CD8-positive, alpha-beta T cell (primary cell): ENCODE measurements at regions of chr3 and their contacts with region 1.

Region 1: DNA sequence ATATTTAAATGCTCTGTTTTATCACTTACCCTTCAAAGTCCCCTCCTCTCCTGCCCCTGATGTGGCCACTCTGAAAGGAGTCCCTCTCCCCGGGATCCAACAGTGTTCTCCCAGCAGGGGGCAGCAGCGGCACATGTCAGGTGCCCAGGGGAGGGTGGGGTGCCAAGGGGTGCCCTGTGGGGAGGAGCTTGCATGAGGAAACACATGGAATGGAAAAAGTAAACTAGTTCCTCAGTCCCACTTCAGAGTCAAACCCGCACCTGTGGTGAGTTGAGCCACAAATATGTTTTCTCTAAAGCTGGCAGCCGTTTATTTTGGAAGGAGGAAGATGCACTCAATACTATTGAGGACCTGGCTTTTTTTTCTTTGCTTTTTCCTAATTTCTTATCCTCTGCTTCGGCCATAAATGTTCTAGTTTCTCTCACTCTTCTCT is 30.1 kb upstream of the NRROS start:
- DNase-seq: peak; percentile 85 to 99 (median 93)
- ATAC-seq: peak; percentile 81
- H3K4me3 ChIP-seq: no peak overlapping the region
- H3K4me3 Mint-ChIP-seq: peak overlapping the region; percentile 62
- H3K27ac ChIP-seq: peak overlapping the region in 1 of 2 experiments; percentile 14
- H3K27ac Mint-ChIP-seq: peak overlapping the region; percentile 81
- H3K4me1 ChIP-seq: peaks cover 27% of the 10 kb centered on the region
- H3K4me1 Mint-ChIP-seq: peaks cover 40% of the 10 kb centered on the region
- H3K27me3 ChIP-seq: no peaks in the 10 kb centered on the region
- H3K27me3 Mint-ChIP-seq: no peaks in the 10 kb centered on the region
- CTCF ChIP-seq: peak; percentile 93

Region 2: GRCh38 chr3:196596355-196596754 is 13.0 kb before region 1 on chr3:
- CTCF ChIA-PET with region 1: interaction called, 17 read pairs
- POLR2A ChIA-PET with region 1: interaction called, 4 read pairs
- intact Hi-C with region 1: no loop called
- DNase-seq: no peak
- ATAC-seq: no peak
- H3K4me3 ChIP-seq: no peak overlapping the region
- H3K4me3 Mint-ChIP-seq: no peak overlapping the region
- H3K27ac ChIP-seq: no peak overlapping the region
- H3K27ac Mint-ChIP-seq: no peak overlapping the region
- H3K4me1 ChIP-seq: peaks cover 4% of the 10 kb centered on the region
- H3K4me1 Mint-ChIP-seq: peaks cover 21% of the 10 kb centered on the region
- H3K27me3 ChIP-seq: no peaks in the 10 kb centered on the region
- H3K27me3 Mint-ChIP-seq: no peaks in the 10 kb centered on the region
- CTCF ChIP-seq: no peak

Region 3: DNA sequence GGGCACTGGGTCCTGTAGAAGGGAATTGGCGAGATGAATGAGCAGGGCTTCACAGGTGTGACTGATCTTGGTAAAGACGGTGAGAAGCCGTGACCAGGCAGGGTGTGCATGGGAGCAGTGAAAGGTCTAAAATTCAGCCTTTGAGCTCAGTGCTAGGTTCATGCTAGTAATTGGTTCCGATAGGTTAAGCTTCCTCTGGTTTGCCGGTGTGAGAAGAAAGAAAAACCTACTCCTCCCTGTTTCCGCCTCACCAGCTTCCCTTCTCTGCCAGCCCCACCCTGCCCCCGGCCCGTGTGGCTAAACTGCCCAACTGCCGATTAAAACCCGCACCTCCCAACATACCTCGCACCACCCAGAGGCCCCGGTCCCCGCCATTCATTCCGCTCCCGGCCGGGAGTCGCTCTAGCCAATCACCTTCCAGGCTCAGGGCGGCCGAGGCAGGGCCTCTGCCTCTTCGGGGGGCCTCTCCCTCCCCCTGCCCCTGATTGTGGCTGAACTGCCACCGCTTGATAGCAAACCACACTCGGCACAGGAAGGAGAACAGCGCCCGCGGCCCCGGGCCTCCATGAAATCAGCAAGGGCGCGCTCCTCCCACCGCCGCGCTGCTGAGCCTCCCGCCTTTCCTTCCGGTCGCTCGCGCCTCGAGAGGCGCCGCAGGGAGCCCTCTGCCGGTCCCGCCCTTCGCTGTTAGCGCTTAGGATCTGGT is 22.8 kb after region 1 on chr3:
- CTCF ChIA-PET with region 1: interaction called, 91 read pairs
- POLR2A ChIA-PET with region 1: interaction called, 11 read pairs
- intact Hi-C with region 1: loop called (anchors 1 kb)
- DNase-seq: peak; percentile 70 to 96 (median 89)
- ATAC-seq: peak; percentile 79
- H3K4me3 ChIP-seq: peak overlapping the region; percentile 46 to 50
- H3K4me3 Mint-ChIP-seq: peak overlapping the region; percentile 80
- H3K27ac ChIP-seq: peak overlapping the region; percentile 56 to 80
- H3K27ac Mint-ChIP-seq: peak overlapping the region; percentile 93
- H3K4me1 ChIP-seq: peaks cover 36% of the 10 kb centered on the region
- H3K4me1 Mint-ChIP-seq: peaks cover 51% of the 10 kb centered on the region
- H3K27me3 ChIP-seq: no peaks in the 10 kb centered on the region
- H3K27me3 Mint-ChIP-seq: no peaks in the 10 kb centered on the region
- CTCF ChIP-seq: no peak

Region 4: DNA sequence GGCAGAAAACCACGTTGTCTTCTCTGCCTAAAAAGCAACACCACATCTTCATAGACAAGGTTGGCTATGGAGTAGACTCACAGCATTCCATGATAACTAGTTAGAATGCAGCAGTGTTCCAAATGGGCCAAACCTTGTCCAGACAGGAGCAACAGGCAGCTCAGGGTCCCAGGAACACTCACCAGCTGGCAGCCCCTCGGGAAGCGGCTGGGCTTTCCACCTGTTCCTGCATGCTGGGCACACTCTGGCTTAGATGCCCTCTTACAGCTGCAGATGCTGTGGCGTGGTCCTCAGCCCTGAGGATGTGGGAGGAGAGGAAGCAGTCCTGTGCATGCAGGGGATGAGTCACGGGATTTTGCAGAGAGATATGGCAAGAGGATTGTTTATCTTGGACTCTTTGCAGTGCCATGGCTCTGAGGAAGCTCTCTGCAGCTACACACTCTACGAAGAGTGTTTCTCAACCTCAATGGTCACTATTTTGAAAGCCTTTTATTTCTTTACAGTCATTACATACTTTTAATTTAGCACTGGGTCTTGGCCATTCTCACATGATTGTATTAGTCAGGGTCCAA is 41.5 kb after region 1 on chr3:
- CTCF ChIA-PET with region 1: interaction called, 15 read pairs
- POLR2A ChIA-PET with region 1: no interaction called
- intact Hi-C with region 1: no loop called
- DNase-seq: no peak
- ATAC-seq: no peak
- H3K4me3 ChIP-seq: no peak overlapping the region
- H3K4me3 Mint-ChIP-seq: no peak overlapping the region
- H3K27ac ChIP-seq: no peak overlapping the region
- H3K27ac Mint-ChIP-seq: no peak overlapping the region
- H3K4me1 ChIP-seq: peaks cover 4% of the 10 kb centered on the region
- H3K4me1 Mint-ChIP-seq: peaks cover 26% of the 10 kb centered on the region
- H3K27me3 ChIP-seq: no peaks in the 10 kb centered on the region
- H3K27me3 Mint-ChIP-seq: no peaks in the 10 kb centered on the region
- CTCF ChIP-seq: no peak

Region 5: DNA sequence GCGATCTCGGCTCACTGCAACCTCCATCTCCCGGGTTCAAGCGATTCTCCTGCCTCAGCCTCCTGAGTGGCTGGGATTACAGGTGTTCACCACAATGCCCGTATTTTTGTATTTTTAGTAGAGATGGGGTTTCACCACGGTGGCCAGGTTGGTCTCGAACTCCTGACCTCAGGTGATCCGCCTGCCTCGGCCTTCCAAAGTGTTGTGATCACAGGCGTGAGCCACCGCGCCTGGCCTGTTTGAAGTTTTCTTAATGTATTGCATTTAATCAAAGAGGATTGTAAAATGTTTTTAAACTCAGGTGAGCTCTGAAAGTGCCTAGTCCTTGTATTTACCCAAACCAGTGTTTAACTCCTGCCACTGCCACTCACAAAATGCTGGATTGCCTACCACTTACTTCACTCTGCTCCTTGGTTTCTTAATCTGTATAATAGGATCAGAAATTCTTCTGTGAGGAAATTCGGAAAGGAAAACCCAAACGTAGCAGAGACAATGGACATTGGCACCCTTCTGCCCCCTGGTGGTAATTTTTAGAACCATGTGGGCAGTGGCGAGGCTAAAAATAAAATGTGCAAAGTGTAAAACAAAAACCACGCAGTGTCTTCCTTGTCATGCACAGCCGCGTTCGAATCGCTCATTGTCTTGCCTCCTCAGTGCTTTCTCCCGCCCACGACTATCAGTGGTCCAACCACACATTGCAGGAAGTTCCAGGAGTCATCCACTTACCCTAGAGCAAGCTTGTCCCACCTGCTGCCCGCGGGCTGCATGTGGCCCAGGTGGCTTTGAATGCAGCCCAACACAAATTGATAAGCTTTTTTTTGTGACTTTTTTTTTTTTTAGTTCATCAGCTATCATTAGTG is 75.4 kb after region 1 on chr3:
- CTCF ChIA-PET with region 1: interaction called, 235 read pairs
- POLR2A ChIA-PET with region 1: interaction called, 7 read pairs
- intact Hi-C with region 1: loop called (anchors 1 kb)
- DNase-seq: peak; percentile 30 to 83 (median 68)
- ATAC-seq: peak; percentile 82
- H3K4me3 ChIP-seq: peak overlapping the region; percentile 11 to 37
- H3K4me3 Mint-ChIP-seq: peak overlapping the region; percentile 67
- H3K27ac ChIP-seq: peak overlapping the region in 1 of 2 experiments; percentile 61
- H3K27ac Mint-ChIP-seq: peak overlapping the region; percentile 34
- H3K4me1 ChIP-seq: peaks cover 13% of the 10 kb centered on the region
- H3K4me1 Mint-ChIP-seq: peaks cover 10% of the 10 kb centered on the region
- H3K27me3 ChIP-seq: no peaks in the 10 kb centered on the region
- H3K27me3 Mint-ChIP-seq: no peaks in the 10 kb centered on the region
- CTCF ChIP-seq: peak; percentile 95

Region 6: GRCh38 chr3:196711838-196712513 is 102.6 kb after region 1 on chr3 and contains the starts of genes CEP19 and PIGX:
- CTCF ChIA-PET with region 1: interaction called, 8 read pairs
- POLR2A ChIA-PET with region 1: no interaction called
- intact Hi-C with region 1: loop called in 1 of 2 experiments (anchors 1 kb)
- DNase-seq: peak; percentile 77 to 99 (median 91)
- ATAC-seq: peak; percentile 83
- H3K4me3 ChIP-seq: peak within 1 kb of the TSS; percentile 72 to 93
- H3K4me3 Mint-ChIP-seq: peak within 1 kb of the TSS; percentile 88
- H3K27ac ChIP-seq: peak within 1 kb of the TSS; percentile 90 to 98
- H3K27ac Mint-ChIP-seq: peak within 1 kb of the TSS; percentile 98
- H3K4me1 ChIP-seq: peaks cover 17% of the 10 kb centered on the region
- H3K4me1 Mint-ChIP-seq: peaks cover 31% of the 10 kb centered on the region
- H3K27me3 ChIP-seq: no peaks in the 10 kb centered on the region
- H3K27me3 Mint-ChIP-seq: no peaks in the 10 kb centered on the region
- CTCF ChIP-seq: no peak
- total RNA-seq, gene CEP19: 0.39 to 0.41 TPM
- total RNA-seq, gene PIGX: 12.0 to 12.2 TPM

Region 7: GRCh38 chr3:196942226-196942914 is 333.0 kb after region 1 on chr3 and contains the start of gene NCBP2:
- CTCF ChIA-PET with region 1: no interaction called
- POLR2A ChIA-PET with region 1: no interaction called
- intact Hi-C with region 1: loop called in 1 of 2 experiments (anchors 10 kb)
- DNase-seq: peak; percentile 98 to 100 (median 100)
- ATAC-seq: peak; percentile 91
- H3K4me3 ChIP-seq: peak within 1 kb of the TSS; percentile 87 to 91
- H3K4me3 Mint-ChIP-seq: peak within 1 kb of the TSS; percentile 90
- H3K27ac ChIP-seq: peak within 1 kb of the TSS; percentile 95 to 96
- H3K27ac Mint-ChIP-seq: peak within 1 kb of the TSS; percentile 97
- H3K4me1 ChIP-seq: peaks cover 18% of the 10 kb centered on the region
- H3K4me1 Mint-ChIP-seq: peaks cover 44% of the 10 kb centered on the region
- H3K27me3 ChIP-seq: no peaks in the 10 kb centered on the region
- H3K27me3 Mint-ChIP-seq: no peaks in the 10 kb centered on the region
- CTCF ChIP-seq: peak; percentile 59
- total RNA-seq, gene NCBP2: 40.4 to 42.9 TPM